GM10248 (cell line): ENCODE measurements at regions of chr4 and their contacts with region 1.

Region 1: DNA sequence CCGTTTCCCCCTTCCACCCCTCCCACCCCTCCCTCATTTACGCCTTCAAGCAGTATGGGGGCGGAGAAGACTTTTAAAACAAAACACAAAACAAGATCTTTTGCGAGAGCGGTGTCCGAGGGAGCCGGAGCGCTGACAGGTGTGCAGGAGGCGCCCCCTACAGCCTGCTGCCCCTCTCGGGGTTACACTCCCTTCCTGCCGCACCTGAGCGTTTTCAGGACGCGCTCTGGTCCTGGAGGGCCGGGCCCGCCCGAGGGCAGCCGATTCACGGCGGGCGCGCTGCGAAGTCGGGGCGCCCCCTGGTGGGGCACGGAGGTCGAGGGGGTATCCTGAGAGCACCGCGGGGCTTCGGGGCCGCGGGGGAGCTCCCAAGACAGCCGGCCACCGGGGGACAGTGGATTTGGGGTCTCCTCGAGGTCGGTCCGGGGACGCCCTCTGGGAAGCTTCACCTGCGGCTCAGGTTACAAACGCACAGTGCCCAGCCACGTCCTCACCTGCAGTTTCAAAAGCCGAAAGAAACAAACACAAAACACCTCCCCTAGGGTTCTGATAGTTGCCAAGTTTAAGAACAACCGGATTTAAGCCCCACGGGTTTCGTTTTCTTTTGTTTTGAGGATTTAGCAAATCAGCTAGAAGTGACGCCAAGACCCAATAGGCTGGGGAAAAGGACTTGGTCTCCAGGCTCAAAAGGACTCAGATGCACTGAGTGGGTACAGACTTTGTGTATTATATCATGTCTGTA is 8.0 kb upstream of the NEUROG2 start:
- DNase-seq: peak; percentile 87
- CTCF ChIP-seq: peak; percentile 84

Region 2: GRCh38 chr4:112093636-112094202 is 430.2 kb before region 1 on chr4:
- CTCF ChIA-PET with region 1: interaction called, 63 read pairs
- POLR2A ChIA-PET with region 1: no interaction called
- DNase-seq: no peak
- CTCF ChIP-seq: no peak

Region 3: DNA sequence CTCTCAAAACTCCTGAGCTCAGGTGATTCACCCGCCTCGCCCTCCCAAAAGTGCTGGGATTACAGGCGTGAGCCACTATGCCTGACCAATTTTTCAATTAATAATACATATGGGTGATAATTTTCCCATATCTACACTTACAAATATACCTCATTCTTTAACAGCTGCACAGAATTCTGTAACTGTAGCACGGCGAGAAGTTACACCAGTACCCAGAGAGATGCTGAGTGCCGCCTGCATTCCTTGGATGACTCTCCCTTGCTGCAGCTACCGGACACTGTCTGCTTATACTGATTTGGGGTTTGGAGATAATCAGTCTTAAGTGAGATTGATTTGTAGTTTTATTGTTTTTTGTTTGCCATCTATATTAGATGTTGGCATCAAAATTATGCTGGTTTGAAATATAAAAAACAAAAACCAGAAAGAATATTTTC is 244.0 kb before region 1 on chr4:
- CTCF ChIA-PET with region 1: interaction called, 15 read pairs
- POLR2A ChIA-PET with region 1: no interaction called
- DNase-seq: no peak
- CTCF ChIP-seq: no peak

Region 4: DNA sequence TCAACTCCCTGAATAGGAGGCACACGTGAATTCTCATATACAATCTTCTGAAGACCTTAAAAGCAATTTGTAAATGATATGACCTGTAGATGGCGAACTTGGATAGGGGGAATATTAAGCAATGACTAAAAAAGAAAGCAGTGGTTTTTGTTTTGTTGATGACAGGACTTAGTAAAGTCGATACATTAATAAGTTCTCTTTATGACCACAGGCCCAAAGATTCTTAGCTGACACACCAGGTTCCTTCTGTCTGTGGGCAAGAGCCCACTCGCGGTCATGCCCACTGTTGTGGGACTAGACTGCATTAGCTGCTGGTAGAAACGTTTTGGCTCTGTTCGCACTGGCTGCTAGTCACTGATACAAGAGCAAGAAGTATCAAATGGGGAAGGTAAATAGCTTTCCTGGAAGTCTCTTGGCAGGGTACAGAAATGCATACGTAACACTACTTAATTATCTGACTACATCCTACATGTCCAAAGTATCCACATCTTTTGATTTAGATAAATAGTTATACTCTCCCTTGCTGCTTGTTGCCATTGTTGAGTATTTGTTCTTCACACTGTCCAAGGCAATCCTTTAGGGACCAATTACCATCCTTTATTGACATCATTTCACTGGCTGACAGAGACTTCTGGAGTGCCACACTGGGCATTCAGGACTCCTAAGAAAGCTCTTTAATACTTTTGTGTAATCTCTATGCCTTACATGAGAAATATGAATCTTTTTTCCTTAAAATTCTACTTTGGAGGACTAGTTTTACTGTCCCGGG is 195.8 kb before region 1 on chr4:
- CTCF ChIA-PET with region 1: interaction called, 156 read pairs
- POLR2A ChIA-PET with region 1: no interaction called
- DNase-seq: peak; percentile 57
- CTCF ChIP-seq: peak; percentile 49

Region 5: DNA sequence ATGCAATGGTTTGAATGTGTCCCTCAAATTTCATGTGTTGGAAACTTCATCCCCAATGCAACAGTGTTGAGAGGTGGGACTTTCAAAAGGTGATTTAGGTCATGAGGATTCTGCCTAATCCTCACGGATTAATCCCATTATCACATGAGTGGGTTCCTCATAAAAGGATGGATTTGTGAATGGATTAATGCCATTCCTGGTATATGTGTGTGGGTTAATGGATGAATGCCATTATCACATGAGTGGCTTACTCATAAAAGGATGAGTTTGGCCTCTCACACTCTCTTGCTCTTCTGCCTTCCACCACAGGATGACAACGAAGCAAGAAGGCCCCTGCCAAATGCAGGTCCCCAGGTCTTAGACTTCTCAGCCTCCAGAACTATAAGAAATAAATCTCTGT is 22.5 kb after region 1 on chr4:
- CTCF ChIA-PET with region 1: interaction called, 17 read pairs
- POLR2A ChIA-PET with region 1: no interaction called
- DNase-seq: no peak
- CTCF ChIP-seq: no peak

Region 6: GRCh38 chr4:112765317-112765975 is 241.5 kb after region 1 on chr4:
- CTCF ChIA-PET with region 1: interaction called, 10 read pairs
- POLR2A ChIA-PET with region 1: no interaction called
- DNase-seq: peak; percentile 51
- CTCF ChIP-seq: peak; percentile 54